ENCODE measurements at regions of chr7 and their contacts with region 1.

Region 1: GRCh38 chr7:150378853-150379440 is at the start of gene ZNF775:
- DNase-seq: peak; percentile 93
- H3K4me3 ChIP-seq: peak within 1 kb of the TSS; percentile 81 to 85 (median 81)
- H3K27ac ChIP-seq: peak within 1 kb of the TSS; percentile 87
- H3K4me1 ChIP-seq: peaks cover 29% of the 10 kb centered on the region
- H3K27me3 ChIP-seq: no peaks in the 10 kb centered on the region
- CTCF ChIP-seq: no peak
- POLR2A ChIP-seq: peak; percentile 97
- total RNA-seq, gene ZNF775: 8.3 and 9.7 TPM in 2 replicates

Region 2: DNA sequence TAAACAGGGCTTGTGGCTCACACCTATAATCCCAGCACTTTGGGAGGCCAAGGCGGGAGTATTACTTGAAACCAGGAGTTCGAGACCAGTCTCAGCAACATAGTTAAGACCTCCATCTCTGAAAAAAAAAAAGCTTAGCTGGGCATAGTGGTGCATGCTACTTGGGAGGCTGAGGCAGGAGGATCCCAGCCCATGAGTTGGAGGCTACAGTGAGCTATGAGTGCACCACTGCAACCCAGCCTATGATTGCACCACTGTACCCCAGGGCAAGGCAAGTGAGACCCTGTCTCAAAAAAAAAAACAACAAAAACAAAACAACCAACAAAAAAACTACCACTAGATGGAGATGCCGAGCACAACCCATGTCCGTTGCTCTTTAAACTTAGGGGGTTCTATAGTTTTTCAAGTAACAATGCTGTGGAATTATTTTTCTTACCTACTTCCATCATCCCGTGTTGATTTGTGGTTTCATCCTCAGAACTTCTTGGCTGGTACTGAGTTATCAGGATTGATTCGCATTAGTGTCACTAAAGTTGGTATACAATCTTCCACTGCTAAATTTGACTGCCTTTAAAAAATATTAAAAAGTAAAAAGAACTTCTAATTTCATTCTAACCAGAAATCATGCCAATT is 22.6 kb before region 1 on chr7:
- CTCF ChIA-PET with region 1: interaction called, 11 read pairs
- POLR2A ChIA-PET with region 1: no interaction called
- dilution Hi-C with region 1: no loop called
- intact Hi-C with region 1: loop called (anchors 2 kb)
- DNase-seq: peak; percentile 64
- H3K4me3 ChIP-seq: no peak overlapping the region
- H3K27ac ChIP-seq: no peak overlapping the region
- H3K4me1 ChIP-seq: no peaks in the 10 kb centered on the region
- H3K27me3 ChIP-seq: peaks cover 0 to 2% of the 10 kb centered on the region in 2 experiments
- CTCF ChIP-seq: peak; percentile 57 to 62
- POLR2A ChIP-seq: no peak

Region 3: GRCh38 chr7:150368096-150368883 is 10.7 kb before region 1 on chr7 and contains the start of gene REPIN1:
- CTCF ChIA-PET with region 1: interaction called, 16 read pairs
- POLR2A ChIA-PET with region 1: interaction called, 13 read pairs
- dilution Hi-C with region 1: no loop called
- intact Hi-C with region 1: loop called (anchors 1 kb)
- DNase-seq: peak; percentile 76
- H3K4me3 ChIP-seq: peak within 1 kb of the TSS; percentile 49 to 79 (median 62)
- H3K27ac ChIP-seq: peak within 1 kb of the TSS; percentile 57
- H3K4me1 ChIP-seq: peaks cover 26% of the 10 kb centered on the region
- H3K27me3 ChIP-seq: no peaks in the 10 kb centered on the region
- CTCF ChIP-seq: no peak
- POLR2A ChIP-seq: no peak
- total RNA-seq, gene REPIN1: 139 and 140 TPM in 2 replicates

Region 4: DNA sequence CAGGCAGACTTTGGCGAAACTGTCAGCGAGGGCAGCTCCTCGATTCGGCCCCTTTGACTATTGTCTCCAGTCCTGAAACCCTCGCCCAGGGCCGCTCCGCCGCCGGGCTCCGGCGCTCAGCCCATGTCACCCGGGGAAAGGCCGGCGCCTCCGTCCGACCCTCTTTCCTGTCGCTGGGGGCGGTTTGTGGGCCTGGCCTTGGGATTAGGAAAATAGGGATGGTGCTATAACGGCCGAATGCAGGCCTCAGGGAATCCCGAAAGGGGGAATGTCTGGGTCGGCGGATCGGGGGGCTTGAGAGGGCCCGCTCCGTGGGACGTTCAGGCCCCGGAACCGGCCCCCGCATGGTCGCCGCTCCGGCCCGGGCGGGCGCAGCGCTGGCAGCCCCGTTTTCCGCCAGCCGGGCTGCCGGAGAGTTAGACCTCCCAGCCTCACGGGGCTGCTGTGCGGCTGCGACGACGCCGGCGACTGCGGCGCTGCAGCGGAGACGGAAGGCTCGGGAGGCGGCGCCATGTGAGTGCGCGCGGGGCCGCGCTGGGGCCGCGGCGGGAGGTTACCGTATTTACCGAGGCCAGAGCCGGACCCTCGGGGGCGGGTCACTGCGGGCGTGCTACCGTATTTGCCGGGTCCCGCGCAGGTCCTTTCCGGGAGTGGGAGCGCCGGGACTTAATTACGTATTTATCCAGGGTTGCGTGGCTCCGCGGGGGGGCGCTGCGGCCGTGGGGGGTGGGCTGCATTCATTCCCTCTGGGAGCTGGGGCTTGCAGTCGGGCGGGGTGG is 26.0 kb after region 1 on chr7:
- CTCF ChIA-PET with region 1: interaction called, 5 read pairs
- POLR2A ChIA-PET with region 1: interaction called, 4 read pairs
- dilution Hi-C with region 1: no loop called
- intact Hi-C with region 1: loop called (anchors 1 kb)
- DNase-seq: peak; percentile 87
- H3K4me3 ChIP-seq: peak overlapping the region; percentile 68 to 81 (median 79)
- H3K27ac ChIP-seq: peak overlapping the region; percentile 71
- H3K4me1 ChIP-seq: peaks cover 15% of the 10 kb centered on the region
- H3K27me3 ChIP-seq: no peaks in the 10 kb centered on the region
- CTCF ChIP-seq: peak in 1 of 2 donors; percentile 22
- POLR2A ChIP-seq: peak; percentile 89

Region 5: DNA sequence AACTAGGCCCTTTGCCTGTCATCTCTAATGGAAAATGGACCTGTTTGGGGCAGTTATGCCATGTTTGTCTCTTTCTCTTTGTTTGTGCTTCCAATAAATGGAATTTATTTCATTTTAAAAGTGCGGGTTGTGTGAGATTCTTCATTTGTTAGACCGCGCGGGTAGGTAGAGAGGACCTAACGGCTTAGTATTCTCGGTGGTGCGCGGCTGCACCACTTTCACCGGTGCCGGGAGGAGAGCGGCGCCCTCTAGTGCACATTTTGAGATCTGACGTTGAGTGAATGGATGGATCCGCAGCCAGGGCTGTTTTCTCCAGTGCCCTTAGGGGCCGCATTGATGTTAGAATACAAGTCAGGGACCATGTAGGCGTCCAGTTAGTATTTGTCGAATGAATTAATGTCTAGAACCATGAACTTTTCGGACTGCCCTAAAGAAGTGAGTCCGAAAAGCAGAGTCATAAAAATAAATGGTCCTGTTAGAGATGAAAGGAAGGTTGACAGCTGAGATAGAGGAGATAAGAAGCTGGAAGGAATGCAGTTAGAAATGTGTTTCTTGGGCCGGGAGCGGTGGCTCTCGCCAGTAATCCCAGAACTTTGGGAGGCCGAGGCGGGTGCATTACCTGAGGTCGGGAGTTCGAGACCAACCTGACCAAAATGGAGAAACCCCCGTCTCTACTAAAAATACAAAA is 42.2 kb after region 1 on chr7:
- CTCF ChIA-PET with region 1: interaction called, 3 read pairs
- POLR2A ChIA-PET with region 1: no interaction called
- dilution Hi-C with region 1: no loop called
- intact Hi-C with region 1: loop called (anchors 1 kb)
- DNase-seq: peak; percentile 80
- H3K4me3 ChIP-seq: no peak overlapping the region
- H3K27ac ChIP-seq: no peak overlapping the region
- H3K4me1 ChIP-seq: no peaks in the 10 kb centered on the region
- H3K27me3 ChIP-seq: no peaks in the 10 kb centered on the region
- CTCF ChIP-seq: peak; percentile 80 to 81
- POLR2A ChIP-seq: no peak

Region 6: GRCh38 chr7:150567169-150567568 is 188.2 kb after region 1 on chr7 and contains the start of gene GIMAP4:
- CTCF ChIA-PET with region 1: no interaction called
- POLR2A ChIA-PET with region 1: no interaction called
- dilution Hi-C with region 1: no loop called
- intact Hi-C with region 1: loop called (anchors 10 kb)
- DNase-seq: peak; percentile 69
- H3K4me3 ChIP-seq: peak within 1 kb of the TSS; percentile 78 to 80 (median 79)
- H3K27ac ChIP-seq: peak within 1 kb of the TSS; percentile 63
- H3K4me1 ChIP-seq: peaks cover 62% of the 10 kb centered on the region
- H3K27me3 ChIP-seq: no peaks in the 10 kb centered on the region
- CTCF ChIP-seq: no peak
- POLR2A ChIP-seq: peak; percentile 49
- total RNA-seq, gene GIMAP4: 168 and 174 TPM in 2 replicates

Region 7: GRCh38 chr7:150586785-150587152 is 207.8 kb after region 1 on chr7:
- CTCF ChIA-PET with region 1: no interaction called
- POLR2A ChIA-PET with region 1: no interaction called
- dilution Hi-C with region 1: no loop called
- intact Hi-C with region 1: loop called (anchors 5 kb)
- DNase-seq: peak; percentile 96
- H3K4me3 ChIP-seq: peak overlapping the region in 1 of 3 experiments; percentile 24
- H3K27ac ChIP-seq: peak overlapping the region; percentile 93
- H3K4me1 ChIP-seq: peaks cover 34% of the 10 kb centered on the region
- H3K27me3 ChIP-seq: no peaks in the 10 kb centered on the region
- CTCF ChIP-seq: no peak
- POLR2A ChIP-seq: no peak

Region 8: DNA sequence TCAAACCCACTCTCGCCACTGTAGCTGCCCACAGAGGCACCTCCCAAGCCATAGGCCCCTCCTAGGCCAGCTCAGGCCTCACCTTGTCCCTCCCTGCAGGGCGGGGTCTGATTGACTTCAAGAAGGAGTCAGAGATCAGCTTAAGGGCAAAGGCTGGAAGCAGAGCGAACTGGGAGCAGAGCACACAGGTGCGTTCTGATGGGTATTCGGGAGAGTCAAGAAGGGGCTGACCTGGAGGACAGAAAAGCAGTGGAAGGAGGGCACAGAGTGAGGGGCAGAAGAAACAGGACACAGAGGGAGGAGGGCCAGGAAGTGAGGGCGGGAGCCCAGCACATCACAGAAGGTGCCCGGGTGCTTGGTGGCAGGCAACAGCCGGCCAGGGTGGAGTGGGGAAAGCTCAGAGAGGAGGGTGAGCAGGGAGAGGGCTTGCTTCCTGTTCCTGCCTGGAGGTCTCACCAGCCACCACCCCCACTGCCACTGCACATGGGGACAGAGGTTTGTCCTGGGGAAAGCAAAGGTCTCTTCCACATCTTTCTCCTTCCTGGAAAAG is 473.5 kb after region 1 on chr7 and contains the start of gene AOC1:
- CTCF ChIA-PET with region 1: no interaction called
- POLR2A ChIA-PET with region 1: no interaction called
- dilution Hi-C with region 1: no loop called
- intact Hi-C with region 1: no loop called
- DNase-seq: no peak
- H3K4me3 ChIP-seq: no peak within 1 kb of the TSS
- H3K27ac ChIP-seq: no peak within 1 kb of the TSS
- H3K4me1 ChIP-seq: no peaks in the 10 kb centered on the region
- H3K27me3 ChIP-seq: peaks cover 0 to 17% of the 10 kb centered on the region in 2 experiments
- CTCF ChIP-seq: no peak
- POLR2A ChIP-seq: no peak
- total RNA-seq, gene AOC1: not detected in 2 replicates

Region 9: DNA sequence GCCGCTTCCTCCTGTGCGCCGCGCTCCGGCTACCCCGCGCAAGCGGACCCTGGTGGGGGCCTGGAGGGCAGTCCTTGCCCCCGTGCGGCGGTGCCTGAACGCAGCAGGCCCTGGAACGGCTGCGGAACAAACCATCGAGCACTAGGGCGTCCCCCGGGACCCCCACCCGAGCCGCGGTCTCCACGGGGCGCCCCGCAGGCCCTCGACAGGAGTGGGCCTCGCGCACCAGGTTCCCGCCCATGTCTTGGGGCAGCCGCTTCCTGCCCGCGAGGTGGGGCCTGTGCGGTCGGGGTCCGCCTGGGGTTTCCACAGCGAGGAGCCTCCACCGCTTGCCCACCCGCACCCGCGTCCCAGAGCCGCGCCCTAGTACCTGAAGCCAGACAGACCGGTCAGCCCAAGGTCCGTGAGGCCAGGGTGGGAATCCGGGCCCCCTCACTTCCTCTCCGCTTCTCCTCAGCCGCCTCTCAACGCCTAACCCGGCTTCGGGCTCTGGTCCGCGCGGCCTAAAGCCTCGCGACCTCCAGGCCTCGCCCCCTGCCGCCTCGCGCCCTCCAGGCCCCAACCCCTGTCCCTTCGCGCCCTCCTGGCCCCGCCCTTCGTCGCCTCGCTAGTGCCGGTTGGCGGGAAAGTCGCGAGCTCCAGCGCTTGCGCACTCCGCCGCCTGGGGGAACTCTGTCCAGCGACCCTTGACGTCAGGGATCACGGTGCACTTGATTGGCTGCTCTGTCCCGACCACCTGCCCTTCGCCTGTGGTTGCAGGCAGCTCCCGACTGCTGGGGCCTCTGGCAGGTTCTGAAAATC is 795.5 kb after region 1 on chr7:
- CTCF ChIA-PET with region 1: no interaction called
- POLR2A ChIA-PET with region 1: no interaction called
- dilution Hi-C with region 1: no loop called
- intact Hi-C with region 1: no loop called
- DNase-seq: peak; percentile 36
- H3K4me3 ChIP-seq: no peak overlapping the region
- H3K27ac ChIP-seq: no peak overlapping the region
- H3K4me1 ChIP-seq: no peaks in the 10 kb centered on the region
- H3K27me3 ChIP-seq: peaks cover 10 to 16% of the 10 kb centered on the region in 2 experiments
- CTCF ChIP-seq: no peak
- POLR2A ChIP-seq: no peak

Measured in endothelial cell of umbilical vein (primary cell).